Panc1 (cell line): ENCODE measurements at regions of chrX and their contacts with region 1.

Region 1: DNA sequence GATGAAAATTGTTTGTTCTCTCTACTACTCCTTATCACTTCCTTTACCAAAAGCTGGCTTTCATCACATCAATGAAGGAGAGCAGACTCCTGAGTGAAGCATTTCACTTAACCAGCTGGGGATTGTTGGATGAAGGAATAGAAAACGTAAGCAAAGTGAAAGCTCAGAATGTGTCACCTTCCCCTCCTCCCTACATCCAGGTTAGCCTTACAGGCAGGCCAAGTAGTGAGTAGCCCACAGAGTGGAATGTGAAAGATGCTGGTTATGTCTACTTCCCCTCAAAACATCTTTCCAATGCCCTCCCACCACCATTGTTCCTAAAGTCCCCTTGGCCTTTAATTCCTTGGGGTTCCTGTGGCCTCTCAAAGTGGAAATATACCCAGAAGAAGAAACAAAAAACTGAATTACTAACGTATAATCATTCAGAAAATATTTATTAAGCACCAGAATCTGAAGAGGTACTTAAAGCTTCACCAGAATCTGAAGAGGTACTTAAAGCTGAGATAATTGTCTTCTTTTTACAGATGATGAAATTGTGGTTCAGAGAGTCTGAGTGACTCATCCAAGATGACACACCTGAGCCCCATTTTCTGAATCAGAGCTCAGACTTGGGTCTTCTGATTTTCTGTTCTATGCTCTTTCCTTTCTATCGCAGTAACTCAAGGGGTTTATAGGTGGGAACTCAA is 6.5 kb downstream of the P2RY4 start:
- DNase-seq: no peak
- ATAC-seq: no peak
- H3K4me3 ChIP-seq: no peak overlapping the region
- H3K27ac ChIP-seq: no peak overlapping the region
- H3K4me1 ChIP-seq: no peaks in the 10 kb centered on the region
- H3K27me3 ChIP-seq: peaks cover 4% of the 10 kb centered on the region; the same call in 1 of the 2 replicates
- CTCF ChIP-seq: no peak

Region 2: DNA sequence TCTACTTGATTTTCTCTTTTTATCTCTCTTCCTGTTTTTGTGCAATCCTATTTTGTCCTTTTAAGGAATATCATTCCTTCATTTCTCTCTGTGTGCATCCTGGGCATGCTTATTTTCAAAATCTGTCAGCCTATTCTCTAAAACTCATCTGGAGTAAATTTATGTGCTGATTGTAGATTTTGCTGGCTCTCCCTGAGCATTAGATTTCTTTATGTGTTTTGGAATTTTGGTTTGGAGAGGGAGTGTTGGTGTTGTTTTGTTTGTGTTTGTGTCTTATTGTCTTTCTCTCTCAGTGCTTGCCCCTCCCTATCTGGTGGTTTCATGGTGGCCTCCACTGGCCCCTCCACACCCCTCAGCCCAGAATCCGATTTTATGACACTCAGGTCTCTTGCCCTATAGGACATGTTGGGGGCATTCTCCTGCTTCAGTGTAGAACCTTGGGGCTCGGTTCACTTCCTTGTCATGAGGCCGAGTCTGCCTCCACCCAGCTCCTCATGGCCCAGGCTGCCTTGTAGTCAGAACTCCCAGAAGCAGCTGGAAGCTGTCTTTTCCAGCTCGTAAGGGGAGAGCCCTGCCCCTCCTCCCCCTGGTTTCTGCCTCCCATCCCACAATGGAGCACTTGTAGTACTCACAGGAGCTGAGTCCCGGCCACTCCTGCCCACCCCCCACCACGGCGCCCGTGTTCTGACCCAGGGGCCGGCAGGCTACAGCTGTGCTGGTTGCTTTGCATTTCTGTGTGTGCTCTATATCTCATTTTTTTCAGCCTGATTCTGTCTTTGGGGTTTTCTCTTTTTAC is 1063.7 kb before region 1 on chrX:
- CTCF ChIA-PET with region 1: no interaction called
- POLR2A ChIA-PET with region 1: no interaction called
- in situ Hi-C with region 1: no loop called
- intact Hi-C with region 1: no loop called
- DNase-seq: no peak
- ATAC-seq: no peak
- H3K4me3 ChIP-seq: no peak overlapping the region
- H3K27ac ChIP-seq: no peak overlapping the region
- H3K4me1 ChIP-seq: no peaks in the 10 kb centered on the region
- H3K27me3 ChIP-seq: no peaks in the 10 kb centered on the region
- CTCF ChIP-seq: no peak

Region 3: DNA sequence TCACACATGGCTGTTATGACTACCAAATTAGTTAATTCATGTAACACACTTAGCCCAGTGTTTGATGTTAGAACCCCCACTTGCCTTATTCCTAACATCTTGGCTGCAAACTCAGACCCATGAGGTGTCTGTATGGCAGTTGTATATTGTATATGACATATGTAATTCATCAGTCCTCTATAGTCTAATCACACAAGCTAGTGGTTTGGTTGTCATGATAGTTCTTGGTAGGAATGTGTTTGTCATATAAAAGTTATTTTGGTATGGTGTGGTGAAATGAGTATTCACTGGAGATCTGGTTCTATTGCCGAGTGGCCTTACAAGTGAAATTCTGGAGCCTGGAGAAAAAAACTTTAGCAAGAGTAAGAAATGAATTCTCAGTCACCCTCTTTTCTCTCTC is 353.0 kb before region 1 on chrX:
- CTCF ChIA-PET with region 1: no interaction called
- POLR2A ChIA-PET with region 1: no interaction called
- in situ Hi-C with region 1: no loop called
- intact Hi-C with region 1: no loop called
- DNase-seq: no peak
- ATAC-seq: no peak
- H3K4me3 ChIP-seq: no peak overlapping the region
- H3K27ac ChIP-seq: no peak overlapping the region
- H3K4me1 ChIP-seq: no peaks in the 10 kb centered on the region
- H3K27me3 ChIP-seq: no peaks in the 10 kb centered on the region
- CTCF ChIP-seq: no peak

Region 4: DNA sequence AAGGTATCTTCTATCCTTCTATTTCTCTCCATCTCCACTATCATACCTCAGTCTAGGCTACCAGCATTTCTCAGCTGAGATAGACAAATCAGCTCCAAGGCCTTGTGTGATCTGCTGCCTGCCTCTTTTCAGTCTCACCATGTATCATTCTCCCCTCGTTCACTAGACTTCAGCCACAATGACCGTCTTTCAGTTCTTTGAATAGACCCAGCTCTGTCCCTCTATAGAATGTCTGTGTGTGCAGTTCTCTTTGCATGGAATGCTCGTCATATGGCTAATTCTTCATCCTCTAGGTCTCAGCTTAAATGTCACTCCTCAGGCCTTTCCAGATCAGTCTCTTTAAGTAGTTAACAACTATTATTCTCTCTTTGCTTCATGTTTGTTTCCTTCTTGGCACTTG is 113.8 kb before region 1 on chrX:
- CTCF ChIA-PET with region 1: no interaction called
- POLR2A ChIA-PET with region 1: interaction called, 11 read pairs
- in situ Hi-C with region 1: no loop called
- intact Hi-C with region 1: no loop called
- DNase-seq: no peak
- ATAC-seq: no peak
- H3K4me3 ChIP-seq: no peak overlapping the region
- H3K27ac ChIP-seq: no peak overlapping the region
- H3K4me1 ChIP-seq: peaks cover 5% of the 10 kb centered on the region; the same call in 1 of the 2 replicates
- H3K27me3 ChIP-seq: no peaks in the 10 kb centered on the region
- CTCF ChIP-seq: no peak